ENCODE measurements at regions of chr7 and their contacts with region 1.

Region 1: DNA sequence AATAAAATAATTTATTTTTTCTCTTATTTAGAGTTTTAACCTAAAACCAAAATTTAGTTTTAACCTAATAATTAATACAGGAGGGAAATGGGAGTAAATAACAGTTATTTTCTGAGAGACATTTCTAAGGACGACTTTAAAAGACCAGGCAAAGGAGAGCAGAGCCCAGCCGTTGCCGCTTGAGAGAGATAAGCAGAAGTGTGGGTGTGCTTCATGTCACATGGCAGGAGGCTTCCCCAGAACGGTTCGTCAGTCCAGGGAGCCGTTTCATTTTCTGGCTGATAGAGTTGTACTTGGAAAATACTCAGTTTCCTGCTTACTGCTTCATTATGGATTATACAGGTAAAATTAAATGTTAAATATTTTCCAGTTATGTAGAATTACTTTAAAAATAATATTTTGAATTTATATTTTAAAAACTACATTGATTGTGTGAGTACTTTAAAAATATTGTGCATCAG is 61.4 kb downstream of the ST7 start:
- DNase-seq: peak; percentile 47

Region 2: GRCh38 chr7:117119192-117119924 is 104.7 kb after region 1 on chr7:
- in situ Hi-C with region 1: loop called (anchors 25 kb)
- DNase-seq: peak; percentile 72

Region 3: DNA sequence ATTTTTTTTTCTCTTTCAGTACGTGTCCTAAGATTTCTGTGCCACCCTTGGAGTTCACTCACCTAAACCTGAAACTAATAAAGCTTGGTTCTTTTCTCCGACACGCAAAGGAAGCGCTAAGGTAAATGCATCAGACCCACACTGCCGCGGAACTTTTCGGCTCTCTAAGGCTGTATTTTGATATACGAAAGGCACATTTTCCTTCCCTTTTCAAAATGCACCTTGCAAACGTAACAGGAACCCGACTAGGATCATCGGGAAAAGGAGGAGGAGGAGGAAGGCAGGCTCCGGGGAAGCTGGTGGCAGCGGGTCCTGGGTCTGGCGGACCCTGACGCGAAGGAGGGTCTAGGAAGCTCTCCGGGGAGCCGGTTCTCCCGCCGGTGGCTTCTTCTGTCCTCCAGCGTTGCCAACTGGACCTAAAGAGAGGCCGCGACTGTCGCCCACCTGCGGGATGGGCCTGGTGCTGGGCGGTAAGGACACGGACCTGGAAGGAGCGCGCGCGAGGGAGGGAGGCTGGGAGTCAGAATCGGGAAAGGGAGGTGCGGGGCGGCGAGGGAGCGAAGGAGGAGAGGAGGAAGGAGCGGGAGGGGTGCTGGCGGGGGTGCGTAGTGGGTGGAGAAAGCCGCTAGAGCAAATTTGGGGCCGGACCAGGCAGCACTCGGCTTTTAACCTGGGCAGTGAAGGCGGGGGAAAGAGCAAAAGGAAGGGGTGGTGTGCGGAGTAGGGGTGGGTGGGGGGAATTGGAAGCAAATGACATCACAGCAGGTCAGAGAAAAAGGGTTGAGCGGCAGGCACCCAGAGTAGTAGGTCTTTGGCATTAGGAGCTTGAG is 464.7 kb after region 1 on chr7 and contains the start of gene CFTR:
- in situ Hi-C with region 1: no loop called
- DNase-seq: no peak